Activated naive CD4-positive, alpha-beta T cell treated with anti-CD3 and anti-CD28 coated beads for 36 hours (primary cell): ENCODE measurements at regions of chr1 and their contacts with region 1.

Region 1: GRCh38 chr1:157090196-157090647 is 9.4 kb downstream of the ETV3L start:
- DNase-seq: peak; percentile 94
- H3K4me3 Mint-ChIP-seq: no peak overlapping the region
- H3K27ac Mint-ChIP-seq: no peak overlapping the region
- H3K4me1 Mint-ChIP-seq: no peaks in the 10 kb centered on the region
- H3K27me3 Mint-ChIP-seq: peaks cover 2% of the 10 kb centered on the region

Region 2: DNA sequence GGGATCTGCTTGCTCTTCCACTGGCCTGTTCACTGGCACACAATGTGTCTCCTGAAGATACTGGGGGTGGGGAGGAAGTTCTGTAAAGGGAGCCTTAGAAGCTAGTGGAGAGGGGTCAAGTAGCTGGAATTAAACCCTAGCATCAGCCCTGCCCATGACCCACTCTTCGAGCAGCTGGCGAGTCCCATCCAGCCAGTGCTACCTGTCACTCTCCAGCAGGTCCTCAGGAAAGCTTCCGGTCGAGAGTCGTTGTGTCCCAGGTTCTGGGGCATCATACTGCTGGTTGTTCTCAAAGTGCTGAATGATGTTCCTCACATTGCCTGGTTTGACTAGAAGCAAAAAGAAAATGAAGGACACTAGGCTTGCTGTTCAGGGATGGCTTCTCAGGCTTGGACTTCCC is 138.9 kb before region 1 on chr1:
- CTCF ChIA-PET with region 1: no interaction called
- intact Hi-C with region 1: no loop called
- DNase-seq: no peak
- H3K4me3 Mint-ChIP-seq: no peak overlapping the region
- H3K27ac Mint-ChIP-seq: no peak overlapping the region
- H3K4me1 Mint-ChIP-seq: no peaks in the 10 kb centered on the region
- H3K27me3 Mint-ChIP-seq: no peaks in the 10 kb centered on the region

Region 3: GRCh38 chr1:157073944-157074767 is 16.1 kb before region 1 on chr1:
- CTCF ChIA-PET with region 1: interaction called, 17 read pairs
- intact Hi-C with region 1: no loop called
- DNase-seq: peak; percentile 72
- H3K4me3 Mint-ChIP-seq: no peak overlapping the region
- H3K27ac Mint-ChIP-seq: no peak overlapping the region
- H3K4me1 Mint-ChIP-seq: peaks cover 1% of the 10 kb centered on the region
- H3K27me3 Mint-ChIP-seq: peaks cover 10% of the 10 kb centered on the region

Region 4: DNA sequence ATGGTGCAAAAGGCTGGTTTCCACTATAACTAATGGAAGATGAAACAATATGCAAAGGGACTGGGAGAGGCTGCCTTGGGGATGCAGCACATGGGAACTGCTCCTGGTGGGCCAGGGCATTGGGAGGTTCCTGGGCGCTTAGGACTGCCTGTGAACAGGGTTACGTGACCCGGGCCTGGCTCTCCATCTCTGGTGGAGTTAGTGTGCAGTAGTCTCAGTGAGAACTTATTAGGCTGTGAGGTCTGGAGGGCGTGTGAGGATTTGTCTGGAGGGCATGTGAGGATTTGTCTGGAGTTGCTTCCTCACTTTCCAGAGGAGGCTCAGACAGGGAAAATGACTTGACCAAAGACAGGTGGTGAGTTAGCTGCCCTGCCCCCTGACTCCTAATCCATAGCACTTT is 10.9 kb after region 1 on chr1:
- CTCF ChIA-PET with region 1: interaction called, 10 read pairs
- intact Hi-C with region 1: no loop called
- DNase-seq: no peak
- H3K4me3 Mint-ChIP-seq: no peak overlapping the region
- H3K27ac Mint-ChIP-seq: no peak overlapping the region
- H3K4me1 Mint-ChIP-seq: peaks cover 4% of the 10 kb centered on the region
- H3K27me3 Mint-ChIP-seq: peaks cover 3% of the 10 kb centered on the region

Region 5: GRCh38 chr1:157110003-157110402 is 19.8 kb after region 1 on chr1:
- CTCF ChIA-PET with region 1: interaction called, 13 read pairs
- intact Hi-C with region 1: no loop called
- DNase-seq: no peak
- H3K4me3 Mint-ChIP-seq: no peak overlapping the region
- H3K27ac Mint-ChIP-seq: no peak overlapping the region
- H3K4me1 Mint-ChIP-seq: peaks cover 8% of the 10 kb centered on the region
- H3K27me3 Mint-ChIP-seq: peaks cover 12% of the 10 kb centered on the region

Region 6: GRCh38 chr1:157124855-157125254 is 34.6 kb after region 1 on chr1:
- CTCF ChIA-PET with region 1: no interaction called
- intact Hi-C with region 1: no loop called
- DNase-seq: no peak
- H3K4me3 Mint-ChIP-seq: no peak overlapping the region
- H3K27ac Mint-ChIP-seq: no peak overlapping the region
- H3K4me1 Mint-ChIP-seq: peaks cover 19% of the 10 kb centered on the region
- H3K27me3 Mint-ChIP-seq: no peaks in the 10 kb centered on the region

Region 7: DNA sequence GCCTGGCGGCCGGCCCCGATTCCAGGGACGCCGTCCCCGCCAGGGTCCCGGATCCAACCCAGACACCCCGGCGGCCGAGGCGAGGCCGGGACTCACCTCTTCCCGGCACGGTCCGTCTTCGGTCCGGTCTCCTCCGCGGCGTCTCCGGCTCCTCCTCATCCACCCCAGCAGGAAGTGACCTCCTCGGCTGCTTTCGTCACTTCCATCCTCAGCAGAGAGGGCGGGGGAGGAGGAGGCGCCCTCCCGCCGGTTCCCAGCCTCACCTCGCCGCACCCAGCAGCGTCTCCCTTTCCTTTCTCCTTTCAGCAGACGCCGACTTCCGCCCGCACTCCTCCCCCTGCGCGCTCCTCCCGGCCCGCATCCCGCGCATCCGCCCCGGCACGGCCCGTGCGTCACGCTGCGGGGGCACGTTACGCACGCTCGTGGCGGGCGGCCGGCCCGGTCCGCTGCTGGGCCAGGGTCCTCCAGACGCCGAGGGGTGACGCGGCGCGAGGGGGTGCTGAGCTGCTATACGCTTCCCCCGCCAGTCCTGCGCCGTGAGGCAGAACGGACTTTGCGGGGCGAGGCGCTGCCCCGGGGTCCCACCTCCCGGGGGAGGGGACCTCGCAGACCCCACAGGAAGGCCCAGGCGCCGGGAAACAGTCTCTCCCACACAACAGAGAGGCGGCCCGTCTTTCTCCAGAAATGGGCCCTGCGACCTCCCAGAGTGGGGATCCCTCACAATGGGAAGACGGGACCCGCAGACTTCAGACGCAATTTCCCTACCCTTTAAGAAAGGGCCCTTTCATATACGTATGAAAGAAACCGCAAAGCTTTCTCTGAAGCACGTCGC is 48.2 kb after region 1 on chr1 and contains the start of gene ETV3:
- CTCF ChIA-PET with region 1: interaction called, 45 read pairs
- intact Hi-C with region 1: no loop called
- DNase-seq: peak; percentile 95
- H3K4me3 Mint-ChIP-seq: peak within 1 kb of the TSS; percentile 96
- H3K27ac Mint-ChIP-seq: peak within 1 kb of the TSS; percentile 85
- H3K4me1 Mint-ChIP-seq: peaks cover 56% of the 10 kb centered on the region
- H3K27me3 Mint-ChIP-seq: no peaks in the 10 kb centered on the region
- total RNA-seq, gene ETV3: 23.2 to 23.3 TPM

Region 8: GRCh38 chr1:157156058-157156541 is 65.9 kb after region 1 on chr1:
- CTCF ChIA-PET with region 1: interaction called, 378 read pairs
- intact Hi-C with region 1: loop called (anchors 1 kb)
- DNase-seq: peak; percentile 81
- H3K4me3 Mint-ChIP-seq: no peak overlapping the region
- H3K27ac Mint-ChIP-seq: no peak overlapping the region
- H3K4me1 Mint-ChIP-seq: peaks cover 14% of the 10 kb centered on the region
- H3K27me3 Mint-ChIP-seq: no peaks in the 10 kb centered on the region

Region 9: GRCh38 chr1:157217486-157217885 is 127.3 kb after region 1 on chr1:
- CTCF ChIA-PET with region 1: no interaction called
- intact Hi-C with region 1: no loop called
- DNase-seq: no peak
- H3K4me3 Mint-ChIP-seq: no peak overlapping the region
- H3K27ac Mint-ChIP-seq: no peak overlapping the region
- H3K4me1 Mint-ChIP-seq: no peaks in the 10 kb centered on the region
- H3K27me3 Mint-ChIP-seq: peaks cover 20% of the 10 kb centered on the region